ENCODE measurements at regions of chr6 and their contacts with region 1.

Region 1: GRCh38 chr6:142838821-142839685 is 105.9 kb downstream of the HIVEP2 start:
- DNase-seq: peak; percentile 77
- H3K4me3 Mint-ChIP-seq: peak overlapping the region; percentile 55
- H3K27ac Mint-ChIP-seq: peak overlapping the region; percentile 87
- H3K4me1 Mint-ChIP-seq: peaks cover 48% of the 10 kb centered on the region
- H3K27me3 Mint-ChIP-seq: no peaks in the 10 kb centered on the region
- CTCF ChIP-seq: no peak

Region 2: GRCh38 chr6:142802124-142802523 is 36.9 kb before region 1 on chr6:
- CTCF ChIA-PET with region 1: no interaction called
- POLR2A ChIA-PET with region 1: interaction called, 6 read pairs
- intact Hi-C with region 1: loop called (anchors 2 kb)
- DNase-seq: peak; percentile 96
- H3K4me3 Mint-ChIP-seq: no peak overlapping the region
- H3K27ac Mint-ChIP-seq: peak overlapping the region; percentile 75
- H3K4me1 Mint-ChIP-seq: peaks cover 10% of the 10 kb centered on the region
- H3K27me3 Mint-ChIP-seq: no peaks in the 10 kb centered on the region
- CTCF ChIP-seq: no peak

Measured in MCF 10A (cell line).